ENCODE measurements at regions of chr15 and their contacts with region 1.

Region 1: GRCh38 chr15:95459273-95459672 is 871.2 kb upstream of the NR2F2 start:
- DNase-seq: no peak
- ATAC-seq: peak in 3 of 4 donors; percentile 44 to 82 (median 81)
- H3K4me3 ChIP-seq: no peak overlapping the region
- H3K27ac ChIP-seq: peak overlapping the region in 11 of 12 donors; percentile 1 to 73 (median 50)
- H3K4me1 ChIP-seq: peaks cover 0 to 32% (median 13%) of the 10 kb centered on the region in 12 donors
- H3K27me3 ChIP-seq: no peaks in the 10 kb centered on the region
- CTCF ChIP-seq: no peak
- POLR2A ChIP-seq: no peak

Region 2: GRCh38 chr15:95304151-95304946 is 154.9 kb before region 1 on chr15:
- intact Hi-C with region 1: loop called in 1 of 10 experiments (anchors 10 kb)
- DNase-seq: peak in 2 of 5 donors; percentile 32 to 48
- ATAC-seq: peak; percentile 57 to 78 (median 70)
- H3K4me3 ChIP-seq: peak overlapping the region in 3 of 12 donors; percentile 6 to 14 (median 11)
- H3K27ac ChIP-seq: peak overlapping the region; percentile 30 to 92 (median 72)
- H3K4me1 ChIP-seq: peaks cover 0 to 36% (median 18%) of the 10 kb centered on the region in 12 donors
- H3K27me3 ChIP-seq: no peaks in the 10 kb centered on the region
- CTCF ChIP-seq: no peak
- POLR2A ChIP-seq: peak in 1 of 2 donors; percentile 22

Region 3: DNA sequence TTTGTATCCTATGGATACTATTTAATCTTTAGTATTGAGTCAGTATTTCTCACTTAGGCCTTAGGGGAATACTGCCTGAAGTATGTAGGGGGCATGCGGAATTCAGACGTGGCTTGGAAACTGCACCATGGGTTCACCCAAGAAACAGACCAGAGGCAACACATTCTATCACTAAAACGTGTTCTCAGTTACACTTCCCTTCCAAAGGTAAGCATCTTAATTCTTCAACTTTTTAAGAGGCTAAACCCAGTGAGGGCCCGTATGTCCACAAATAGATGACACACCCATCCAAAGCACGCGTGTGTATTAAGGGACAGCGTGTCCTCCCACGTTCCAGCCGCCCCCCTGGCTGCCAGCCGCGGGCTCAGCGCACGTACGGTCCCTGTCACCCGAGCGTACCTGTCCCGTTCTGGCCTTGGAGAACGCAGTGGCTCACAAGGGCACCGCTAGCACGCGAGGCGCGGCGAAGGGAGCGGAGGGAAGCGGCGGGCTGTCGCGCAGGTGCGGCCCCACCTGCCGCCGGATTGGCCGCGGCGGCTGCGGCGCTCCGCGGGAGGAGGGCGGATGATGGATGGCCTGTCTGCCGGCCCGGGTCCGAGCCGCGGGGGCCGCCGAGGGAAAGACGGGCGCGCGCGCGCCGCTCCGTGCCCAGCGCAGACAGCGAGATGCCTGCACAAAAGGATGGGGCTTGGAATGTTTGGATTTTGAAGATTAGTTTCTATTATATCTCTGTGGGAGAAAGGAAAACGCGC is 132.7 kb before region 1 on chr15:
- intact Hi-C with region 1: loop called in 1 of 10 experiments (anchors 10 kb)
- DNase-seq: peak in 3 of 5 donors; percentile 20 to 56 (median 28)
- ATAC-seq: peak; percentile 35 to 62 (median 47)
- H3K4me3 ChIP-seq: peak overlapping the region; percentile 21 to 69 (median 55)
- H3K27ac ChIP-seq: peak overlapping the region; percentile 54 to 93 (median 86)
- H3K4me1 ChIP-seq: peaks cover 0 to 16% (median 0%) of the 10 kb centered on the region in 12 donors
- H3K27me3 ChIP-seq: peaks cover 0 to 14% (median 5%) of the 10 kb centered on the region in 9 donors
- CTCF ChIP-seq: no peak
- POLR2A ChIP-seq: no peak

Region 4: DNA sequence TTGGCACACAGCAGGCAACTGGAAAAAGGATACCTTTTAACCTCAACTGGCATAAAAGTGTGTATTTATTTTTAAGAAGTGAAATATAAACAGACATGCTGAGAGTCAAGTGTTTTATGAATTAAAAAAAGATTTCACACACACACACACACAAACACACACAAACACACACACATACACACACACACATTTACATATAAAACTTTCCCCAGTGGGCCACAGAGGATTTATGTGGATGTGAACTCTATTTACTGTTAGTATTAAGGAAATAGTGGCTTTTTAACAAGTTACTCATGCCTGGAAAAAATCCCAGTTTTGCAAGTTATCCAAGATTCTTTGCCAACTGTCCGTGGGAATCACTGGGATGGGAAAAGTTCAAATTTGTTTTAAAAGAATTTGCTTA is 145.4 kb after region 1 on chr15:
- intact Hi-C with region 1: loop called in 1 of 10 experiments (anchors 10 kb)
- DNase-seq: peak in 2 of 5 donors; percentile 27 to 59
- ATAC-seq: peak in 2 of 4 donors; percentile 62 to 69
- H3K4me3 ChIP-seq: no peak overlapping the region
- H3K27ac ChIP-seq: peak overlapping the region in 8 of 12 donors; percentile 30 to 74 (median 54)
- H3K4me1 ChIP-seq: peaks cover 0 to 25% (median 7%) of the 10 kb centered on the region in 12 donors
- H3K27me3 ChIP-seq: no peaks in the 10 kb centered on the region
- CTCF ChIP-seq: no peak
- POLR2A ChIP-seq: no peak